ENCODE measurements at regions of chr11 and their contacts with region 1.

Region 1: DNA sequence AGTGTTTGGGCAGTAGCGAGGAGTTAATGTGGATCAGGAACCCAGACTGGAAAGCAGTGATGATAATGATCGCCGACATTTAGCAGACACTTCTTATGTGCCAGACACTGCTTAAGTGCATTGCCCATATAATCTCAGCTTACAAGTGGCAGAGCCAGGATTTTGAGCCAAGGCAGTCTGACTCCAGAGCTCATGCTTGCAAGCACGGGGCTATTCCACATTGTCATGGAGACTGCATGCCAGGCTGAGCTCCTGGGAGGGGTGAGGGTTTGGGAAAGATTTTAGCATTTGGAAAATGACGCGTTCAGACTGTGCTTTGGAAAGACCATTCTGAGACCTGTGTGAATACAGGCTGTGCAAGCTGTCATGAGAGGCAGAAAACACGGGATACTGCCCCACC is 302.7 kb downstream of the DDX10 start:
- DNase-seq: no peak
- ATAC-seq: peak; percentile 93

Region 2: GRCh38 chr11:108857382-108857781 is 110.2 kb before region 1 on chr11:
- intact Hi-C with region 1: loop called (anchors 5 kb)
- DNase-seq: peak; percentile 57
- ATAC-seq: peak; percentile 88

Region 3: GRCh38 chr11:109300211-109300610 is 332.6 kb after region 1 on chr11:
- intact Hi-C with region 1: loop called (anchors 2 kb)
- DNase-seq: no peak
- ATAC-seq: no peak